ENCODE measurements at regions of chr10 and their contacts with region 1.

Region 1: DNA sequence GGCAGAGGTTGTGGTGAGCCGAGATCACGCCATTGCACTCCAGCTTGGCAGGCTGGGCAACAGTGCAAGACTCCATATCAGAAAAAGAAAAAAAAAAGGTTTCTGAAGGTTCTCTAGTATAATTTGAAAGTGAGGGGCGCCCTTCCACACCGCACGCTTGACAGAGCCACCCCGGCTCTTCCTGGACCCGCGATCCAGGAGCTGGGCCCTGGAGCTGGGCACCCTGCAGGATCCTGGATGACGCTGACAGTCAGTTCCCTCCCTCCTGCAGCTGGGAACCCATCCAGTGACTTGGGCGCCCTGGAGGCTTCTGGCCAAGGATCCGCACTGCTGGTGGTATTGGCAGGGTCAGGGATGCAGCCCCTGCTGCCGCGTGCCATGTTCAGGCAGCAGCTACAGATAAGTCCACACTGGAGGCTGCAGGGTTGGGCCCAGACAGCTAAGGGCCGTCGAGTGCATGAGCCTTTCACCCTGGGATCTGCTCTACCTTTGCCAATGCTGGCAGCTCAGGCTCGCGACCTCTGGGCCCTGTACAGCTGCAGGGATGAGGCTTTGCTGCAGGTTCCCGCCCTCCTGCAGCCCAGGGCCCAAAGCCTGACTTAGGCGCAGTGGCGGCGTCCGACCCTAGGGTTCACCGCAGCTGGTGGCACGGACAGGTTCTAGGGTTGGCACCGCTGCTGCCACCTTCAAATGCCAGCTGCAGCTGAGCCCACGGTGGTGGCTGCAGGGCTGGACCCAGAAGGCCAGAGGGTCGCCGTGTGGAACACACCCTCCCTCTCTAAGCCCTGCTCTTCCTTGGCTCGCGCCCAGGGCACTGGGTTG is 110.2 kb downstream of the OR13A1 start:
- DNase-seq: no peak
- H3K4me3 ChIP-seq: no peak overlapping the region
- H3K27ac ChIP-seq: no peak overlapping the region
- H3K4me1 ChIP-seq: no peaks in the 10 kb centered on the region
- H3K27me3 ChIP-seq: 0 out of 2 replicates have a peak, but pooled peaks cover 29% of the 10 kb centered on the region
- CTCF ChIP-seq: no peak

Region 2: GRCh38 chr10:45040921-45041542 is 164.1 kb before region 1 on chr10:
- CTCF ChIA-PET with region 1: no interaction called
- POLR2A ChIA-PET with region 1: no interaction called
- intact Hi-C with region 1: loop called (anchors 10 kb)
- DNase-seq: no peak
- H3K4me3 ChIP-seq: no peak overlapping the region
- H3K27ac ChIP-seq: no peak overlapping the region
- H3K4me1 ChIP-seq: no peaks in the 10 kb centered on the region
- H3K27me3 ChIP-seq: no peaks in the 10 kb centered on the region
- CTCF ChIP-seq: no peak

Region 3: GRCh38 chr10:45355494-45355893 is 150.3 kb after region 1 on chr10:
- CTCF ChIA-PET with region 1: no interaction called
- POLR2A ChIA-PET with region 1: no interaction called
- intact Hi-C with region 1: no loop called
- DNase-seq: no peak
- H3K4me3 ChIP-seq: no peak overlapping the region
- H3K27ac ChIP-seq: no peak overlapping the region
- H3K4me1 ChIP-seq: no peaks in the 10 kb centered on the region; the same call in 1 of the 2 replicates
- H3K27me3 ChIP-seq: no peaks in the 10 kb centered on the region
- CTCF ChIP-seq: no peak

Measured in PC-9 (cell line).